Sigmoid colon (tissue), 7 donors: ENCODE measurements at regions of chr6 and their contacts with region 1.

Region 1: GRCh38 chr6:139588076-139588639 is 213.7 kb upstream of the CITED2 start:
- DNase-seq: no peak
- H3K4me3 ChIP-seq: no peak overlapping the region
- H3K27ac ChIP-seq: peak overlapping the region; percentile 69 to 82 (median 77)
- H3K4me1 ChIP-seq: peaks cover 0 to 58% (median 55%) of the 10 kb centered on the region in 4 donors
- H3K27me3 ChIP-seq: no peaks in the 10 kb centered on the region
- CTCF ChIP-seq: no peak
- EP300 ChIP-seq: no peak
- POLR2A ChIP-seq: no peak

Region 2: DNA sequence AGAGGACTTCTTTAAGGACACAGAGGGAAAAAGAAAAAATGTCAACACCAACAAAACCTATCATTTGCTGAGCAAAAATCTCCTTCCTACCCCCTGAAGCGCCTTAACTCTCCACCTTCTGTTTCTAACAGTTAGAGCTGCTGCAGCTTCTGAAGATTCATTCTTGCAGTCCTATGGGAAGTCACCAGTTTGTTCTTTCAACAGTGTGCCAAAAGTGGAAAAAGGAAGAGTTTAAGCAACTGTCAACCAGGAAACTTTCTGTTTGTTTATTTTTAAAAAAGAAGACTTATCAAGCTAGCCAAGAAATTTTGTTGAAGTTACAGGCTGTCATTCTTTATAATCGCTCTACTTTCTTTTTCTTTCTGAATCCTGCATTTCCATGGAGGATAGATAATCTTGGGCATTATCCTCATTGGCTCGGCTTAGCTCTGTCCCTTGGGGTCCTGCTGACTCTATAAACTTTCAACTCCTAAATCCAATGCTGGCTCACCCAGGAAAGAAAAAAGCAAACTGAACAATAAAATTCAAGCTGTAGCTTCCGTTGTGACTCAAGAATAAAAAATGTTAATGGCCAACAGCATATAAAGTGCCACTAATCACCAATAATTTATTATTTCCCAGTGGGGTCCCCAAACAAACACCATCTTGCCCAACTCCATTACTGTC is 40.9 kb before region 1 on chr6:
- intact Hi-C with region 1: loop called (anchors 5 kb)
- DNase-seq: no peak
- H3K4me3 ChIP-seq: no peak overlapping the region
- H3K27ac ChIP-seq: peak overlapping the region in 3 of 4 donors; percentile 28 to 50 (median 49)
- H3K4me1 ChIP-seq: peaks cover 0 to 37% (median 26%) of the 10 kb centered on the region in 4 donors
- H3K27me3 ChIP-seq: no peaks in the 10 kb centered on the region
- CTCF ChIP-seq: no peak
- EP300 ChIP-seq: no peak
- POLR2A ChIP-seq: no peak

Region 3: DNA sequence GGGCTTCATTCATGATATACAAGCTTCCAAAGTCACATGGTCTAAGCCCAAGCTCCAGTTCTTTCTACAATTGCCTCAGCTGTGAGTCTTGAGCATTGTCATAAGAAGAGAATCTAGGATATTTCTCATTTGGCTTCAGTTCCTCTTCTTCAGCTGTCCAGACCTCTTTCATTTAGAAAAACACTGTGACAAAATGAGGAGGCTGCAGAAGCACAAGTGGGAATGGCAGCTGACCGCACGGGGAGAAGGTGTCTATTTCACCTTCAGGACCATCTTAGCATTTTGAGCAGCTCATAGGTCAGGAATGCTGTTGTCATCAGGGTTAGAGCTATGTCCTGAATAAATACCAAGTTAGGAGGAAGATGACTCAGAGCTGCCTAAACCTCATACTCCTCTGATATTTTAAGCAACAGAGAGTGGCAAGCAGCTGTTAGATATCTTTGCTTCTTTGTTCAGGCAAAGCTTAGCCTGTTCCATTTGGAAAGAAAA is 176.4 kb after region 1 on chr6:
- intact Hi-C with region 1: loop called (anchors 2 kb)
- DNase-seq: no peak
- H3K4me3 ChIP-seq: no peak overlapping the region
- H3K27ac ChIP-seq: peak overlapping the region; percentile 71 to 89 (median 84)
- H3K4me1 ChIP-seq: peaks cover 0 to 35% (median 23%) of the 10 kb centered on the region in 4 donors
- H3K27me3 ChIP-seq: no peaks in the 10 kb centered on the region
- CTCF ChIP-seq: no peak
- EP300 ChIP-seq: peak in 2 of 4 donors; percentile 2 to 48
- POLR2A ChIP-seq: no peak